MCF 10A (cell line): ENCODE measurements at regions of chr5 and their contacts with region 1.

Region 1: DNA sequence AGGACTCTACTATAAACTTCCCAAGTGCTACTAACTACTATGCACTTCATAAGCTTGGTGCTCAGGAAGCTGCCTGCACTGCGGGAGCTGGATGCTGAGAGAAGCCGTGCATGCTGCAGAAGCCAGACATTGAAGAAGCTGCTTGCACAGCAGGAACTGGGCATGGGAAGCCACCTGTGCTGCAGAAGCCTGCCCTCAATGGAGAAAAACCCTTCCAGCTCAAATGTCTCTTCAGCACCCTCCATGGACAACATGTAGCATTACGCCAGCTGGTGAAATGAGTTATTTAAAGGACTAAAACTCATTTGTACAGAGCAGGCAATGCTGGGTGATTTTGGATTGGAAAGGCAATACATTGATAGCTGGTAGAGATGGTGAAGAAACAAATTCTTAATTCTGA is 247.2 kb downstream of the KIF4B start:
- DNase-seq: peak; percentile 16
- H3K4me3 Mint-ChIP-seq: no peak overlapping the region
- H3K27ac Mint-ChIP-seq: no peak overlapping the region
- H3K4me1 Mint-ChIP-seq: no peaks in the 10 kb centered on the region
- H3K27me3 Mint-ChIP-seq: no peaks in the 10 kb centered on the region
- CTCF ChIP-seq: peak; percentile 33

Region 2: DNA sequence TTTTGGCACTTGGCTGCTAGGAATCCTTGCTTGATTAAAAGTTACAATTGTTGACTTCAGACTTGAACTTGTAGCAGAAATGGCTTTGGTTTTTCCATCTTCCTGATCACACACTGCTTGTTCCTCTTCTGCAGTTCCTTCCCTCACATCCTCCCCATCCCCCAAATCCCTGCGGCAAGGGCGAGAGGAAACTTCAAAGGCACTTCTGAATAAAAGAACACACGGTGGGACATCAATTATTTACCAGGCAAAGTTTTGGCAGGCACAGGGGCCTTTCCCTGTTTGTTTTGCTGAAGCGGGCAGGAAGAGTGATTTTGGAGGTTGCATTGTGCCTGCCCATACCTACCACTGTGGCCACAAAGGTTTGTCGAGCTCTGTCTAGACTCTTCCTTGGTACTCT is 13.7 kb after region 1 on chr5:
- CTCF ChIA-PET with region 1: interaction called, 11 read pairs
- POLR2A ChIA-PET with region 1: interaction called, 3 read pairs
- intact Hi-C with region 1: no loop called
- DNase-seq: no peak
- H3K4me3 Mint-ChIP-seq: no peak overlapping the region
- H3K27ac Mint-ChIP-seq: no peak overlapping the region
- H3K4me1 Mint-ChIP-seq: no peaks in the 10 kb centered on the region
- H3K27me3 Mint-ChIP-seq: no peaks in the 10 kb centered on the region
- CTCF ChIP-seq: no peak

Region 3: DNA sequence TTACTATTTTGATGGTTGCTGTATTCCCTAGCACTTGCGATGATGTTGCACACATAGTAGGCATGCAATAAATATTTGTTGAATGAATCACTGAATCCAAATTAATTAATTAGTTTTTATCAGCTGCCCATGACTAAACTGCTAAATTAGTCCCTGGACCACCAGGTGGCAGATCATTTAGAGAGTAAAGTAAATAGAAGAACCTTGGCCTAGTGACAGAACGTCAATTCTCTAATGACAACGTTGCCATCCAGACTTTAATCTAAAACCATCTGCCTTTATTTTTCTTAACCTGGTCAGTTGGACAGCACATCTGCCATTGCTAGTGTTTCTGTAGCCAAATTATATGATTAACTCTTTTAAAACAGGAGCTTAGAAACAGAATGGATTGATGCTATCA is 210.2 kb after region 1 on chr5:
- CTCF ChIA-PET with region 1: no interaction called
- POLR2A ChIA-PET with region 1: no interaction called
- intact Hi-C with region 1: no loop called
- DNase-seq: no peak
- H3K4me3 Mint-ChIP-seq: no peak overlapping the region
- H3K27ac Mint-ChIP-seq: no peak overlapping the region
- H3K4me1 Mint-ChIP-seq: no peaks in the 10 kb centered on the region
- H3K27me3 Mint-ChIP-seq: no peaks in the 10 kb centered on the region
- CTCF ChIP-seq: no peak